Endothelial cell of umbilical vein (primary cell): ENCODE measurements at regions of chr13 and their contacts with region 1.

Region 1: DNA sequence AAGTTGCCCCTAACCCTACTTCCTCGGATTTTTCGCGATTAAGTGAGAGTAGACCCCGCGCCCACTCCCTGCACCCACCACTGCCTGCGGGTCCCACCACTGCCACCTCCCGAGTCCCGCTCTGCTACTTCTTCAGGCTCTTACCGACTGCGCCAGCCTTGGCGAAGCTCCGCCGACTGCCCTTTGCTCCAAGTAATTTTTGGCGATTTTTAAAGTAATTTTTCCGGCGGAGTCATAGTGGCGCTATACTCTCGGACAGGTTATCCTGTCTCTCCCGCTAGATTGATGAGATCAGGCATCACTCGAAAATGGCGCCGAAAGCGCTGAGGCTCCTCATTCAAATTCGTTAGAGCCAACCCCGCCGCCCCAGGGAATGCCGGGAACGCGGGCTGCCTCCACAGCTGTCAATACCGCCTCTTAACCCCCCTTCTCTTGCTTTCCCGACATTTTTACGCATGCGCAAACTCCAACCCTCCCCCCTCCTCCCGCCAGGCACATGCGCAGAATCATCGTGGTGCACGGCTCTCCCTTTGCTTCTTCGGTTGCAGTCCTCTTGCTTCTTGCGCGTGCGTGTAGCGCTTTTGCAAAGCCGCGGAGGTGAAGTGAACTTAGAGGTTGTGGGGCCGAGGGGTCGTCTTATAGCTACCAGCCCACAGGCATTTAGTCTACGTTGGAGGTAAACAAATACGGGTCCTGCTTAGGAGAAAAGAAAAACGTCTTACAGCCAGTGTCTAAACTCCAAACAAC is 66.6 kb downstream of the KCNRG start:
- DNase-seq: peak; percentile 100
- H3K4me3 ChIP-seq: peak overlapping the region; percentile 86 to 99 (median 95)
- H3K27ac ChIP-seq: peak overlapping the region; percentile 88
- H3K4me1 ChIP-seq: peaks cover 27% of the 10 kb centered on the region
- H3K27me3 ChIP-seq: no peaks in the 10 kb centered on the region
- CTCF ChIP-seq: peak in 1 of 2 donors; percentile 9
- POLR2A ChIP-seq: peak; percentile 30

Region 2: GRCh38 chr13:49669735-49670309 is 412.0 kb before region 1 on chr13:
- CTCF ChIA-PET with region 1: interaction called, 3 read pairs
- POLR2A ChIA-PET with region 1: no interaction called
- dilution Hi-C with region 1: no loop called
- intact Hi-C with region 1: loop called (anchors 2 kb)
- DNase-seq: peak; percentile 86
- H3K4me3 ChIP-seq: no peak overlapping the region
- H3K27ac ChIP-seq: no peak overlapping the region
- H3K4me1 ChIP-seq: peaks cover 11% of the 10 kb centered on the region
- H3K27me3 ChIP-seq: no peaks in the 10 kb centered on the region
- CTCF ChIP-seq: peak; percentile 60 to 75
- POLR2A ChIP-seq: no peak

Region 3: GRCh38 chr13:50116430-50116973 is 34.6 kb after region 1 on chr13:
- CTCF ChIA-PET with region 1: interaction called, 29 read pairs
- POLR2A ChIA-PET with region 1: no interaction called
- dilution Hi-C with region 1: no loop called
- intact Hi-C with region 1: no loop called
- DNase-seq: peak; percentile 88
- H3K4me3 ChIP-seq: peak overlapping the region in 1 of 3 experiments; percentile 44
- H3K27ac ChIP-seq: peak overlapping the region; percentile 52
- H3K4me1 ChIP-seq: peaks cover 10% of the 10 kb centered on the region
- H3K27me3 ChIP-seq: no peaks in the 10 kb centered on the region
- CTCF ChIP-seq: no peak
- POLR2A ChIP-seq: no peak

Region 4: GRCh38 chr13:50187352-50188029 is 105.6 kb after region 1 on chr13:
- CTCF ChIA-PET with region 1: no interaction called
- POLR2A ChIA-PET with region 1: no interaction called
- dilution Hi-C with region 1: no loop called
- intact Hi-C with region 1: no loop called
- DNase-seq: no peak
- H3K4me3 ChIP-seq: no peak overlapping the region
- H3K27ac ChIP-seq: no peak overlapping the region
- H3K4me1 ChIP-seq: peaks cover 4% of the 10 kb centered on the region
- H3K27me3 ChIP-seq: no peaks in the 10 kb centered on the region
- CTCF ChIP-seq: no peak
- POLR2A ChIP-seq: no peak

Region 5: GRCh38 chr13:50255639-50256038 is 173.8 kb after region 1 on chr13:
- CTCF ChIA-PET with region 1: no interaction called
- POLR2A ChIA-PET with region 1: no interaction called
- dilution Hi-C with region 1: no loop called
- intact Hi-C with region 1: no loop called
- DNase-seq: no peak
- H3K4me3 ChIP-seq: no peak overlapping the region
- H3K27ac ChIP-seq: no peak overlapping the region
- H3K4me1 ChIP-seq: no peaks in the 10 kb centered on the region
- H3K27me3 ChIP-seq: no peaks in the 10 kb centered on the region
- CTCF ChIP-seq: no peak
- POLR2A ChIP-seq: no peak

Region 6: DNA sequence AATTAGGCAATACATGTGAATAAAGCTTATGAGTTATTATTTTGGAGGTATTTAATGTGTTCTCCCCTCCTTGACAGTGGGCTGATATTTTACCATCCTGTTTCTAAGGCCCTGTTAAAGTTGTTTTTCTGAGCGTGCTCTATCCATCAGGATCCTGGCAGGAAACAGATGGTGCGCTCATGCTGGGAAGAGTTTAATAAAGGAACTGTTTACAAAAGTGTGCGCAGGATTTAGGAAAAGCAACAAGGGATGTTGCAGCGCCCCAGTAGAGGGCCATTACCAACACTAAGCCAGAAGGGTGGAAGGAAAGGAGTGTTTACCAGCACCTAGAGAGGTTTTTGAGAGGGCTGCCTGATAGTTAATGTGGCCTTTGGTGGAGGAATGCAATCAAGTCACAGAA is 307.9 kb after region 1 on chr13:
- CTCF ChIA-PET with region 1: interaction called, 5 read pairs
- POLR2A ChIA-PET with region 1: no interaction called
- dilution Hi-C with region 1: no loop called
- intact Hi-C with region 1: loop called (anchors 1 kb)
- DNase-seq: peak; percentile 92
- H3K4me3 ChIP-seq: no peak overlapping the region
- H3K27ac ChIP-seq: peak overlapping the region; percentile 25
- H3K4me1 ChIP-seq: peaks cover 38% of the 10 kb centered on the region
- H3K27me3 ChIP-seq: no peaks in the 10 kb centered on the region
- CTCF ChIP-seq: no peak
- POLR2A ChIP-seq: no peak

Region 7: GRCh38 chr13:50456111-50456510 is 374.3 kb after region 1 on chr13:
- CTCF ChIA-PET with region 1: no interaction called
- POLR2A ChIA-PET with region 1: no interaction called
- dilution Hi-C with region 1: no loop called
- intact Hi-C with region 1: no loop called
- DNase-seq: no peak
- H3K4me3 ChIP-seq: no peak overlapping the region
- H3K27ac ChIP-seq: no peak overlapping the region
- H3K4me1 ChIP-seq: no peaks in the 10 kb centered on the region
- H3K27me3 ChIP-seq: no peaks in the 10 kb centered on the region
- CTCF ChIP-seq: no peak
- POLR2A ChIP-seq: no peak

Region 8: GRCh38 chr13:50512474-50513299 is 430.8 kb after region 1 on chr13:
- CTCF ChIA-PET with region 1: no interaction called
- POLR2A ChIA-PET with region 1: no interaction called
- dilution Hi-C with region 1: no loop called
- intact Hi-C with region 1: loop called (anchors 5 kb)
- DNase-seq: peak; percentile 55
- H3K4me3 ChIP-seq: no peak overlapping the region
- H3K27ac ChIP-seq: no peak overlapping the region
- H3K4me1 ChIP-seq: no peaks in the 10 kb centered on the region
- H3K27me3 ChIP-seq: no peaks in the 10 kb centered on the region
- CTCF ChIP-seq: no peak
- POLR2A ChIP-seq: no peak

Region 9: DNA sequence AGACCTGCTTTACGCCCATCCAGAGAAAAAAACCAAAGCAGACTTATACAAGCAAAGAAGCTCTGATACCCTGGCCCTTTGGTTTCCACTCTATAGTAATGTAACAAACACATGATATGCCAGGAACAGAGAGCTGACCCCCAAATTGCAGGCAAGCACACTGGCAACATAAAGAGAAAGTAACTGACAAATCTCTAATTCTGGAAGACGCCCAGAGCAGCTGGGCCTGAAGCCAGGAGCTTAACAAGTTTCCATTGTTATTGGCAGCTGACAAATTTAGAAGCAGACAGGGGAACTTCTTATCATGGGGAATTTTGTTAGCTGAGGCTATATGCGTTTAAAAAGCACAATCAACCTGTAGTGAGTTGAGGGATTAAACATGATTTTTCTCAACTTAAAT is 603.6 kb after region 1 on chr13:
- CTCF ChIA-PET with region 1: no interaction called
- POLR2A ChIA-PET with region 1: no interaction called
- dilution Hi-C with region 1: no loop called
- intact Hi-C with region 1: loop called (anchors 2 kb)
- DNase-seq: peak; percentile 97
- H3K4me3 ChIP-seq: peak overlapping the region in 1 of 3 experiments; percentile 35
- H3K27ac ChIP-seq: peak overlapping the region; percentile 87
- H3K4me1 ChIP-seq: peaks cover 39% of the 10 kb centered on the region
- H3K27me3 ChIP-seq: no peaks in the 10 kb centered on the region
- CTCF ChIP-seq: no peak
- POLR2A ChIP-seq: no peak

Region 10: GRCh38 chr13:51070005-51070649 is 988.3 kb after region 1 on chr13:
- CTCF ChIA-PET with region 1: interaction called, 5 read pairs
- POLR2A ChIA-PET with region 1: no interaction called
- dilution Hi-C with region 1: no loop called
- intact Hi-C with region 1: loop called (anchors 2 kb)
- DNase-seq: peak; percentile 76
- H3K4me3 ChIP-seq: no peak overlapping the region
- H3K27ac ChIP-seq: no peak overlapping the region
- H3K4me1 ChIP-seq: peaks cover 11% of the 10 kb centered on the region
- H3K27me3 ChIP-seq: peaks cover 3 to 9% of the 10 kb centered on the region in 2 experiments
- CTCF ChIP-seq: peak; percentile 92 to 94
- POLR2A ChIP-seq: no peak